ENCODE measurements at regions of chr17 and their contacts with region 1.

Region 1: GRCh38 chr17:3012926-3013581 is 50.4 kb downstream of the OR1D5 start:
- DNase-seq: peak; percentile 68
- H3K4me3 ChIP-seq: no peak overlapping the region
- H3K27ac ChIP-seq: no peak overlapping the region
- H3K4me1 ChIP-seq: no peaks in the 10 kb centered on the region
- H3K27me3 ChIP-seq: no peaks in the 10 kb centered on the region
- CTCF ChIP-seq: peak; percentile 72

Region 2: GRCh38 chr17:2828397-2829038 is 184.5 kb before region 1 on chr17:
- intact Hi-C with region 1: loop called (anchors 5 kb)
- DNase-seq: peak; percentile 87
- H3K4me3 ChIP-seq: no peak overlapping the region
- H3K27ac ChIP-seq: no peak overlapping the region
- H3K4me1 ChIP-seq: no peaks in the 10 kb centered on the region
- H3K27me3 ChIP-seq: no peaks in the 10 kb centered on the region
- CTCF ChIP-seq: peak; percentile 90

Region 3: DNA sequence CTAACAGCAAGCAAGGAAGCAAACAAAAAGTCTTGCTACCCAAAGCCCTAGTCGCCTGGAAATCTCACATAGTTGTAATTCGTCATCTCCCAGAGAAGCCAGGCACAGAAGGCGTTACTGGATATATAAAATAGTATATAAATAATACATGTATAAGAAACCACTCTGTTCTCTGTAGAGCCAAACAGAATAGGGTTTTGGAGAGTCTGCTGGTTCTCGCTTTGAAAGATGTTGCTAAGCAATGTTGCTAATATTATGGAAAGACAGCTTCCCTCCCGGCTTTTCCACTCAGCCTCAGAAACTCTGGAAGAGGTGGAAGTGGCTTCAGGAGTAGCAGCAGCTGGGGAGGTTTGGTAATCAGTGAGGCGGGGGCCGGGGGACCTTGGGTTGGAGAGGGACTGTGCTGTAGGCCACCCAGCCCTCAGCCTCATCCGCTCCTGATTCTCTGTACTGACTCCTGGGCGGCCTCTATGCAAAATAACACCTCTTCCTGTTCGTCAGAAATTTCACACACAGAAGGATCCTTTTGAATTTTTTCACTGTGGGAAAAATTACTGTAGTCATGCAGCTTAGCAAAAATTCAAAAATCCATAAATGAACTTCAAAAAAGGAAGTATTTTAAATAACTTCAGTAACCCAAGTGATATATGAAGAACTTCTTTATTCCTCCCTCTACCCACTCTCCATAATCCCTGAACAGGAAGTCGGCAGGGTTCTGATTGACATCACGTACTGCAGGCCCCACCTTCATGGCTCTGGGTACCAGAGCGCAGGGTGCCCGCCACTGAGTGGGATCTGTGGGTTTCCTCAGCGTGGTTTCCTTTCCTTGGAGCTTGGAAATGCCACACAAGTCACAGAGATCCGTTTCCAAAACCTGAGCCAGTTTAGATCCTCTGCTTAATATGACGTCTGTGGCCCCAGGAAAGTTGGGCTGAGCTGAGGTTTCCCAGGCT is 165.4 kb before region 1 on chr17:
- intact Hi-C with region 1: loop called (anchors 5 kb)
- DNase-seq: no peak
- H3K4me3 ChIP-seq: no peak overlapping the region
- H3K27ac ChIP-seq: no peak overlapping the region
- H3K4me1 ChIP-seq: peaks cover 4% of the 10 kb centered on the region
- H3K27me3 ChIP-seq: no peaks in the 10 kb centered on the region
- CTCF ChIP-seq: no peak

Region 4: DNA sequence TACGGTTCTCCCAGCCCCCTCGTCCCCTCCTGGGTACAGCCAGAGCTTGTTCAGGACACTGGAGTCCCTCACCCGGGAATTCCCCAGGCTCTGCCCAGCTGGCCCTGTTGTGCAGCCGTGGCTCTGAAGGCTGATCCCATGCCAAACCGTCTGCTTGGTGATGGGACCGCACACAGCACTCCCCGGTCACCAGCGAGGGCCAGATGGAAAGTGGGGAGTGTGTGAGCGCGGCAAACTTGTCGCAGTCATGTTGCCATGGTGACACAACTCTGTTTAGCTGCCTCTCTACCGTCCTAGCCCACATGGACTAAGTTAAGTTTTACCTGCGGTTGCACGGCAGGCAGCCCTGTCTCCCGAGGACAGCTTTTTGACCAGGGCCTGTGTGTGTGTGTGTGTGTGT is 108.9 kb before region 1 on chr17:
- intact Hi-C with region 1: no loop called
- DNase-seq: no peak
- H3K4me3 ChIP-seq: no peak overlapping the region
- H3K27ac ChIP-seq: no peak overlapping the region
- H3K4me1 ChIP-seq: no peaks in the 10 kb centered on the region
- H3K27me3 ChIP-seq: no peaks in the 10 kb centered on the region
- CTCF ChIP-seq: no peak

Measured in colonic mucosa (tissue), 4 donors.